ENCODE measurements at regions of chrX and their contacts with region 1.

Region 1: GRCh38 chrX:148380650-148381561 is 119.5 kb upstream of the AFF2 start:
- DNase-seq: peak; percentile 32 to 60 (median 46)
- H3K4me3 ChIP-seq: peak overlapping the region; percentile 17 to 50
- H3K4me3 Mint-ChIP-seq: peak overlapping the region; percentile 85 to 94 (median 90)
- H3K27ac ChIP-seq: peak overlapping the region; percentile 72
- H3K27ac Mint-ChIP-seq: peak overlapping the region; percentile 89 to 95 (median 94)
- H3K4me1 ChIP-seq: peaks cover 29% of the 10 kb centered on the region
- H3K4me1 Mint-ChIP-seq: peaks cover 23 to 37% (median 27%) of the 10 kb centered on the region in 4 donors
- H3K27me3 ChIP-seq: no peaks in the 10 kb centered on the region
- H3K27me3 Mint-ChIP-seq: no peaks in the 10 kb centered on the region

Region 2: GRCh38 chrX:148310426-148311165 is 70.3 kb before region 1 on chrX:
- CTCF ChIA-PET with region 1: no interaction called
- POLR2A ChIA-PET with region 1: interaction called, 11 read pairs
- intact Hi-C with region 1: loop called (anchors 2 kb)
- DNase-seq: peak; percentile 68 to 80 (median 77)
- H3K4me3 ChIP-seq: no peak overlapping the region
- H3K4me3 Mint-ChIP-seq: peak overlapping the region in 7 of 8 donors; percentile 60 to 86 (median 76)
- H3K27ac ChIP-seq: no peak overlapping the region
- H3K27ac Mint-ChIP-seq: peak overlapping the region; percentile 53 to 93 (median 77)
- H3K4me1 ChIP-seq: peaks cover 28% of the 10 kb centered on the region
- H3K4me1 Mint-ChIP-seq: peaks cover 22 to 42% (median 31%) of the 10 kb centered on the region in 4 donors
- H3K27me3 ChIP-seq: no peaks in the 10 kb centered on the region
- H3K27me3 Mint-ChIP-seq: no peaks in the 10 kb centered on the region

Region 3: GRCh38 chrX:148784856-148785255 is 403.9 kb after region 1 on chrX:
- CTCF ChIA-PET with region 1: no interaction called
- POLR2A ChIA-PET with region 1: no interaction called
- intact Hi-C with region 1: no loop called
- DNase-seq: no peak
- H3K4me3 ChIP-seq: no peak overlapping the region
- H3K4me3 Mint-ChIP-seq: no peak overlapping the region
- H3K27ac ChIP-seq: no peak overlapping the region
- H3K27ac Mint-ChIP-seq: no peak overlapping the region
- H3K4me1 ChIP-seq: no peaks in the 10 kb centered on the region
- H3K4me1 Mint-ChIP-seq: no peaks in the 10 kb centered on the region
- H3K27me3 ChIP-seq: no peaks in the 10 kb centered on the region
- H3K27me3 Mint-ChIP-seq: no peaks in the 10 kb centered on the region

Measured in CD4-positive, alpha-beta memory T cell (primary cell).